Activated naive CD8-positive, alpha-beta T cell treated with anti-CD3 and anti-CD28 coated beads, Interleukin-2, amount 10 ng/mL, durations not matched to agents 7 days and 5 days (primary cell): ENCODE measurements at regions of chr19 and their contacts with region 1.

Region 1: DNA sequence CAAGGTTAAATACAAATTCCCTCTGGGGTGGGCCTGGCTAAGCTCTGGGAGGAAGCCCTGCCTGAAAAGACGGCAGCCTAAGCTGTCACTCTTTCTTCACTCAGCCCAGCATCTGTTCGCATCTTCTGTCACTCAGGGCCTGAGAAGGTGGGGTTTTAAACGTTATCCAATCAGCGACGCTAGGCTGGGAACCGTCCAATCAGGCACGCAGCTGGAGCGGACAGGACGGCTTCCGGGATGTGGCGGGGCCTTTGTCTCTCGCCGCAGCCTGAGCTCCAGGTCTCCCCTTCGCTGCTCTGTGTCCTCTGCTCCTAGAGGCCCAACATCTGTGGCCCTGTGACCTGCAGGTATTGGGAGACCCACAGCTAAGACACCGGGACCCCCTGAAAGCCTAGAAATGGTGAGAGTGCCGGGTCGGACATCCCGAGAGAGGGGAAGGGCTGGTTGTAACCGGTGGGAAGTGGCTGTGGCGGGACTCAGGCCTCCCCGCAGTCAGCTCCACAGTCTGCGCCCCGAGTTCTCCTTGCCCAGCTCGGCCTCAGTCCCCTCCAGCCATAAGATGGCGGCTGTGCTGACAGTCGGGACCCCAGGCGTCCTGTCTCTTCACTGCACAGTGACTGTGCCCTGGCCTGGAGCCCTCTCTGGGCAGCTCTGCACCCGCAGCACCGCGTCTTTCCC is at the start of gene ZNF431:
- DNase-seq: peak; percentile 84
- ATAC-seq: peak; percentile 99
- H3K4me3 Mint-ChIP-seq: peak within 1 kb of the TSS; percentile 96
- H3K27ac Mint-ChIP-seq: peak within 1 kb of the TSS; percentile 97
- H3K4me1 Mint-ChIP-seq: peaks cover 15% of the 10 kb centered on the region
- H3K27me3 Mint-ChIP-seq: no peaks in the 10 kb centered on the region
- total RNA-seq, gene ZNF431: 21.5 to 28.2 TPM

Region 2: DNA sequence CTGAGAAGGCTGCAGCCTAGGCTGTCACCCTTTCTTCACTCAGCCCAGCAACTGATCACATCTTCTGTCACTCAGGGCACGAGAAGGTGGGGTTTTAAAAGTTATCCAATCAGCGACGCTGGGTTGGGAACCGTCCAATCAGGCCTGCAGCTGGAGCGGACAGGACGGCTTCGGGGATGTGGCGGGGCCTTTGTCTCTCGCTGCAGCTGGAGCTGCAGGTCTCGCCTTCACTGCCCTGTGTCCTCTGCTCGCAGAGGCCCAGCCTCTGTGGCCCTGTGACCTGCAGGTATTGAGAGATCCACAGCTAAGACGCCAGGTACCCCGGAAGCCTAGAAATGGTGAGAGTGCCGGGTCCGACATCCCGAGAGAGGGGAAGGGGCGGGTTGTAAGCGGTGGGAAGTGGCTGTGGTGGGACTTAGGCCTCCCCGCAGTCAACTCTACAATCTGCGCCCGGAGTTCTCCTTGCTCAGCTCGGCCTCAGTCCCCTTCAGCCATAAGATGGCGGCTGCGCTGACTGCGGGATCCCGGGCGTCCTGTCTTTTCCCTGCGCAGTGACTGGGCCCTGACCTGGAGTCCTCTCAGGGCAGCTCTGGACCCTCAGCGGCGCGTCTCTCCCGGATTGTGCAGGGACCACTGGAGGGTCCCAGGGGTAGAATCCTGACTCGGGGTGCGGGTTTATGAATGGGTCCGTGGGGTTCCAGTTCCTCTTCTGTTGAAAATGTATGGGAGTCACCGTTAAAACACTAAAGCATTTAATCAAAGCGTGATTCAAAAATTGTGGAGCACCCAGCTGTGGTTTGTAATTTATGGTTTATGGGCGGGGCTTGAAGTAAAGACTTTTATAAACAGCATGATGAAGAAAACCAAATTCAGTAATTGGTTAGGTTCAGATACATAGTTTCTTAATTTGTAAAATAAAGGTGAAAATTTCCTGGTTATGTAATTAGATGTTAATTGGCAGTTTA is 59.6 kb before region 1 on chr19 and contains the start of gene ZNF714:
- POLR2A ChIA-PET with region 1: interaction called, 19 read pairs
- DNase-seq: peak; percentile 79
- ATAC-seq: peak; percentile 99
- H3K4me3 Mint-ChIP-seq: peak within 1 kb of the TSS; percentile 100
- H3K27ac Mint-ChIP-seq: peak within 1 kb of the TSS; percentile 99
- H3K4me1 Mint-ChIP-seq: peaks cover 13% of the 10 kb centered on the region
- H3K27me3 Mint-ChIP-seq: no peaks in the 10 kb centered on the region
- total RNA-seq, gene ZNF714: 25.1 to 26.6 TPM

Region 3: GRCh38 chr19:21166436-21166835 is 24.5 kb after region 1 on chr19:
- POLR2A ChIA-PET with region 1: no interaction called
- DNase-seq: no peak
- ATAC-seq: no peak
- H3K4me3 Mint-ChIP-seq: no peak overlapping the region
- H3K27ac Mint-ChIP-seq: no peak overlapping the region
- H3K4me1 Mint-ChIP-seq: peaks cover 3% of the 10 kb centered on the region
- H3K27me3 Mint-ChIP-seq: no peaks in the 10 kb centered on the region